Activated T-helper 1 cell treated with anti-CD3 and anti-CD28 coated beads, Interleukin-12 subunit alpha, Interleukin-12 subunit beta, Interleukin-2, Interleukin-4 antibody, amounts not matched to agents 30 ng/mL and 10 ng/mL and 1 ng/mL, durations not matched to agents 14 hours and 24 hours and 36 hours (primary cell): ENCODE measurements at regions of chr11 and their contacts with region 1.

Region 1: DNA sequence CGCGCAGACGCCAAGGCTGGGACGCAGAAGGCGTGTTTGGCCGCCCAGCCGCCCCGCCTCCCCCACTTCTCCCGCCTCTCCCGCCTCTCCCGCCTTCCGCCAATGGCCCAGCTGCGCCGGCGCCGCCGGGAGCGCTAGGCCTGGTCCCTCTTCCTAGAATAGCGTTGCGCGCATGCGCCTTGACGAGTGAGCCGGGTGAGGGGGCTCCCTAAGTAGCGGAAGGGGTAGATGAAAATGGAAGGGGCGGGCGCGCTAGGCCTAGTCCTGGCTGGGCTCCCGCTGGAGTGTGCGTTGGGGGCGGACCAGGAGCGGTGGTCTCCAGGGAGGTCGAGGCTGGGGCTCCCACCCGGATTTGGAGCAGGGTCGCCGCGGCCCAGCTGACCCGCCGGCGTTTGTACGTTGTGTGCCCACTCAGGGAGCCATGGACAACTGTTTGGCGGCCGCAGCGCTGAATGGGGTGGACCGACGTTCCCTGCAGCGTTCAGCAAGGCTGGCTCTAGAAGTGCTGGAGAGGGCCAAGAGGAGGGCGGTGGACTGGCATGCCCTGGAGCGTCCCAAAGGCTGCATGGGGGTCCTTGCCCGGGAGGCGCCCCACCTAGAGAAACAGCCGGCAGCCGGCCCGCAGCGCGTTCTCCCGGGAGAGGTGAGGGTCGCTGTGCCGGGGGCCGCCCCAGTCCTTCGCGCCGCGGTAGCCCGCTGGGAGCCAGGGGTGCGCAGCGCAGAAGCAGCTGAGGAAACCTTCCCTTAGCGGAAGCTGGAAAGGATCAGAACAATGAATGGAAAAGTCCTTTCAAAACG is at the start of gene AKIP1:
- DNase-seq: peak; percentile 77
- H3K4me3 Mint-ChIP-seq: peak within 1 kb of the TSS; percentile 97
- H3K27ac Mint-ChIP-seq: peak within 1 kb of the TSS; percentile 87
- H3K4me1 Mint-ChIP-seq: peaks cover 45% of the 10 kb centered on the region
- H3K27me3 Mint-ChIP-seq: peaks cover 12% of the 10 kb centered on the region
- total RNA-seq, gene AKIP1: 33.4 and 36.9 TPM in 2 replicates

Region 2: GRCh38 chr11:8794677-8795103 is 116.5 kb before region 1 on chr11:
- intact Hi-C with region 1: no loop called
- DNase-seq: no peak
- H3K4me3 Mint-ChIP-seq: no peak overlapping the region
- H3K27ac Mint-ChIP-seq: no peak overlapping the region
- H3K4me1 Mint-ChIP-seq: no peaks in the 10 kb centered on the region
- H3K27me3 Mint-ChIP-seq: peaks cover 12% of the 10 kb centered on the region

Region 3: DNA sequence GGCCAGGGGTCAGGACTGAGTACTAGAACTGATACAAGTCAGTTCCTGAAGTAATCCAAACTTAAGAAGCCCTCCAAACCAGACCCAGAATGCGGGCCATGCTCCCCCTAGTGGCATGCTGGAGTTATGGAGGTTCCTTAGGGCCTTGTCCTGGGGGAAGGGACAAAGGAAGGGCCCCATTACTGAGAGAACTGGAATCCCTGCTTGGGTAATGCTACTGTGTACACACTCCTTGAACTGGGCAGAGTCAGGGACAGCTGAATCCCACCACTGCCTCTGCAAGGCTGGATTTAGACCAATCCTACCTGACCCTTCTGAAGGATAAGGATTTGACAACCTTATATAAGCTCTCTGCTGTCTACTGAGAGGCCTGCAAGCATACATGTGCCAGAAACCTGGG is 97.6 kb before region 1 on chr11:
- intact Hi-C with region 1: loop called (anchors 5 kb)
- DNase-seq: peak; percentile 6
- H3K4me3 Mint-ChIP-seq: no peak overlapping the region
- H3K27ac Mint-ChIP-seq: no peak overlapping the region
- H3K4me1 Mint-ChIP-seq: peaks cover 10% of the 10 kb centered on the region
- H3K27me3 Mint-ChIP-seq: peaks cover 15% of the 10 kb centered on the region

Region 4: GRCh38 chr11:9060700-9061111 is 149.5 kb after region 1 on chr11:
- intact Hi-C with region 1: loop called (anchors 2 kb)
- DNase-seq: peak; percentile 48
- H3K4me3 Mint-ChIP-seq: no peak overlapping the region
- H3K27ac Mint-ChIP-seq: peak overlapping the region; percentile 40
- H3K4me1 Mint-ChIP-seq: peaks cover 12% of the 10 kb centered on the region
- H3K27me3 Mint-ChIP-seq: peaks cover 16% of the 10 kb centered on the region